Activated B cell treated with CpG ODN at 0.5 μM for 24 hours (primary cell): ENCODE measurements at regions of chr10 and their contacts with region 1.

Region 1: GRCh38 chr10:87531908-87532622 is 27.4 kb downstream of the MINPP1 start:
- DNase-seq: no peak
- ATAC-seq: no peak
- H3K4me3 Mint-ChIP-seq: no peak overlapping the region
- H3K27ac Mint-ChIP-seq: no peak overlapping the region
- H3K4me1 Mint-ChIP-seq: no peaks in the 10 kb centered on the region
- H3K27me3 Mint-ChIP-seq: no peaks in the 10 kb centered on the region
- CTCF ChIP-seq: no peak

Region 2: DNA sequence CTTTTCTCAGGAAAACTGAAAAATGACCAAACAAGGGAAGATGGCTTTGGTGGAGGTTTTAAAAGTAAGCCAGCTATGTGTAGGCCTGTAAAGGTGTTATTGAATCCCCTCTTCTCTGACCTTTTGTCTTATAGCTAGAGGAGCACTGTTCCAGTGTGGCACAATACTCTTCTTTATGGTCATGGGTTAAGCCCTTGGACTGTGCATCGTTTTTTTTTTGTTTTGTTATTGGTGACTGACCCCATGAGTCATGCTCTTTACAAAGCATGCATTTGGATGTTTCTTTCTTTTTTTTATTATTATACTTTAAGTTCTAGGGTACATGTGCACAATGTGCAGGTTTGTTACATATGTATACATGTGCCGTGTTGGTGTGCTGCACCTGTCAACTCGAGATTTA is 531.6 kb before region 1 on chr10:
- CTCF ChIA-PET with region 1: no interaction called
- POLR2A ChIA-PET with region 1: no interaction called
- intact Hi-C with region 1: no loop called
- DNase-seq: no peak
- ATAC-seq: no peak
- H3K4me3 Mint-ChIP-seq: no peak overlapping the region
- H3K27ac Mint-ChIP-seq: no peak overlapping the region
- H3K4me1 Mint-ChIP-seq: no peaks in the 10 kb centered on the region
- H3K27me3 Mint-ChIP-seq: no peaks in the 10 kb centered on the region
- CTCF ChIP-seq: no peak

Region 3: DNA sequence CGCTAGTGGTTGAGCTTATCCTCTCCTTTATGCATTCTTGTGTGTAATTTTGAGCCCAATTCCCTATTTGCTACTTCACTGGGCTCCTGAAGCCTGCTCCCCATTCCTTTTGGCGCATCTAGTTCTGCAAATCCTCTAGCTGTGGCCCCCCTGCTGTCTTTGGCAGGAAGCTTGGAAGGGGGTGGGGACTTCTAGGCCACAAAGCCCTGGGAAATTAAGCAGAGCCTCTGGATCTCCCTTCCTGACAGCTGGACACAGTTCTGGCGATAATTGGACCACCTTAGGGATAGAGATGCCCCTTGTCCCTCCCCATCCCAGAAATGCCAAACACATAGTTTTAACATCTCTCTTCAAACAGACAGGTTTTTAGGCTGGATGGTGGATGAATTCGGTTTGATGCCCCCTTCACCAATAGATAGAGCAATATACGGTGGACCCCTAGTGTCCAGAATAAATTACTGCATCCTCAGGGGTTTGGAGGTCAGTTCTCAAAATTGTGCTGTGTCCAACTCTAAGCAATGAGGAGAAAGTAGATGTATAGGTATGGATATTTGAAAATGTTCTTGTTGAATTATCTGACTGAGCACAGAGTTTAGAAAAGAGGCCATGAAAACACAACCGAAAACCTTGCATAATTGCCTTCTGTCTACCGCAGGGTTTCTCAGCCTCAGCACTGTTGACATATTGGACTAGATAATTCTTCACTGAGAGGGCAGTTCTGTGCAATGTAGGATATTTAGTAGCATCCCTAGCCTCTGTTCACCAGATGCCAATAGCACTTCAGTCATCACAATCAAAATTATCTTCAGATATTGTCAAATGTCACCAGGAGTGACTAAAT is 203.1 kb after region 1 on chr10:
- CTCF ChIA-PET with region 1: interaction called, 3 read pairs
- POLR2A ChIA-PET with region 1: no interaction called
- intact Hi-C with region 1: loop called (anchors 1 kb)
- DNase-seq: no peak
- ATAC-seq: peak; percentile 52
- H3K4me3 Mint-ChIP-seq: no peak overlapping the region
- H3K27ac Mint-ChIP-seq: no peak overlapping the region
- H3K4me1 Mint-ChIP-seq: no peaks in the 10 kb centered on the region
- H3K27me3 Mint-ChIP-seq: peaks cover 10% of the 10 kb centered on the region
- CTCF ChIP-seq: peak; percentile 23

Region 4: GRCh38 chr10:87771871-87772500 is 239.9 kb after region 1 on chr10:
- CTCF ChIA-PET with region 1: no interaction called
- POLR2A ChIA-PET with region 1: no interaction called
- intact Hi-C with region 1: loop called (anchors 2 kb)
- DNase-seq: no peak
- ATAC-seq: no peak
- H3K4me3 Mint-ChIP-seq: no peak overlapping the region
- H3K27ac Mint-ChIP-seq: no peak overlapping the region
- H3K4me1 Mint-ChIP-seq: peaks cover 7% of the 10 kb centered on the region
- H3K27me3 Mint-ChIP-seq: no peaks in the 10 kb centered on the region
- CTCF ChIP-seq: peak; percentile 27

Region 5: GRCh38 chr10:88095223-88095721 is 563.2 kb after region 1 on chr10:
- CTCF ChIA-PET with region 1: no interaction called
- POLR2A ChIA-PET with region 1: no interaction called
- intact Hi-C with region 1: no loop called
- DNase-seq: no peak
- ATAC-seq: no peak
- H3K4me3 Mint-ChIP-seq: no peak overlapping the region
- H3K27ac Mint-ChIP-seq: no peak overlapping the region
- H3K4me1 Mint-ChIP-seq: peaks cover 30% of the 10 kb centered on the region
- H3K27me3 Mint-ChIP-seq: no peaks in the 10 kb centered on the region
- CTCF ChIP-seq: no peak